CD14-positive monocyte (primary cell): ENCODE measurements at regions of chr4 and their contacts with region 1.

Region 1: GRCh38 chr4:127880764-127881562 is at the start of gene PLK4:
- DNase-seq: peak; percentile 91 to 96 (median 91)
- H3K4me3 ChIP-seq: peak within 1 kb of the TSS; percentile 86 to 99 (median 87)
- H3K4me3 Mint-ChIP-seq: peak within 1 kb of the TSS; percentile 97 to 98
- H3K27ac ChIP-seq: peak within 1 kb of the TSS; percentile 80 to 97
- H3K27ac Mint-ChIP-seq: peak within 1 kb of the TSS; percentile 97 to 98 (median 98)
- H3K4me1 ChIP-seq: peaks cover 11 to 14% of the 10 kb centered on the region in 2 donors
- H3K4me1 Mint-ChIP-seq: peaks cover 14% of the 10 kb centered on the region
- H3K27me3 ChIP-seq: no peaks in the 10 kb centered on the region
- H3K27me3 Mint-ChIP-seq: peaks cover 0 to 2% (median 1%) of the 10 kb centered on the region in 3 donors
- CTCF ChIP-seq: no peak
- polyA plus RNA-seq, gene PLK4: 0.34 to 0.65 (median 0.38) TPM

Region 2: DNA sequence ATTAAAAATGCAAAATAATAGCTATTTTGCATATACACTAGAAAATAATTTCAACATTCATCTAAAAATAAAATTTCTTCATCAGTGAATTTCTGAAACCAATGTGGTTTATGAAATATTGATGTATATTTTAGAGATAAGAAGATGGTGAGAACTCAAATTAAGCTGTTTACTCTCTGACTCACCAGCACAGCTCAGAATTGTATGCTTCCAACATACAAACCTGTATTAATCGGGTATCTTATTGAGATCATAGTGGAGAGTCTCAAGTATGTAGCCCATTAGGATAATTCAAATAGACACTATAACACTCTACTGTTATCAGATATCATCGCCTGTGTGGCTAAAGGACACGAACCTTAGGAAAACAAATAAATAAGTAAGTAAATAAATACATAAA is 1147.7 kb before region 1 on chr4:
- intact Hi-C with region 1: no loop called
- DNase-seq: no peak
- H3K4me3 ChIP-seq: no peak overlapping the region
- H3K4me3 Mint-ChIP-seq: no peak overlapping the region
- H3K27ac ChIP-seq: no peak overlapping the region
- H3K27ac Mint-ChIP-seq: no peak overlapping the region
- H3K4me1 ChIP-seq: no peaks in the 10 kb centered on the region
- H3K4me1 Mint-ChIP-seq: no peaks in the 10 kb centered on the region
- H3K27me3 ChIP-seq: no peaks in the 10 kb centered on the region
- H3K27me3 Mint-ChIP-seq: no peaks in the 10 kb centered on the region
- CTCF ChIP-seq: no peak

Region 3: DNA sequence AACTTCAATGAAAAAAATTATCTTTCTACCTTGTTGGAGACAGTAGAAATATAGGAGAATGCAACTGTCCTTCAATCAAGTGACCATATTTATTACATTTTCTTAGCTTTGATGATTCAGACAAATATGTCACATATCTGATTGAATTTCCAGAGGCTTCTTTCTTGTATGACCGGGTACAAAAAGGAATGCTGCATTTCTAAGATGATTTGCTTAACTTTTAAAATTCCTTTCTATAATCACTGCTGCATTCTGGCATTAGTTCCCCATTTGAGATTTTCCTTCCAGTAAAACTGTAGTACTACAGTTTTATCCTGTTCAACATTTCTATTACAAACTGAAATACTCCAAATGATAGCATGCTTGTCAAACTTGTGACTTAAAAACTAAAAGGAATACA is 78.8 kb after region 1 on chr4:
- intact Hi-C with region 1: loop called in 1 of 2 experiments (anchors 5 kb)
- DNase-seq: no peak
- H3K4me3 ChIP-seq: no peak overlapping the region
- H3K4me3 Mint-ChIP-seq: no peak overlapping the region
- H3K27ac ChIP-seq: no peak overlapping the region
- H3K27ac Mint-ChIP-seq: no peak overlapping the region
- H3K4me1 ChIP-seq: peaks cover 6 to 8% of the 10 kb centered on the region in 2 donors
- H3K4me1 Mint-ChIP-seq: peaks cover 13% of the 10 kb centered on the region
- H3K27me3 ChIP-seq: no peaks in the 10 kb centered on the region
- H3K27me3 Mint-ChIP-seq: no peaks in the 10 kb centered on the region
- CTCF ChIP-seq: no peak

Region 4: DNA sequence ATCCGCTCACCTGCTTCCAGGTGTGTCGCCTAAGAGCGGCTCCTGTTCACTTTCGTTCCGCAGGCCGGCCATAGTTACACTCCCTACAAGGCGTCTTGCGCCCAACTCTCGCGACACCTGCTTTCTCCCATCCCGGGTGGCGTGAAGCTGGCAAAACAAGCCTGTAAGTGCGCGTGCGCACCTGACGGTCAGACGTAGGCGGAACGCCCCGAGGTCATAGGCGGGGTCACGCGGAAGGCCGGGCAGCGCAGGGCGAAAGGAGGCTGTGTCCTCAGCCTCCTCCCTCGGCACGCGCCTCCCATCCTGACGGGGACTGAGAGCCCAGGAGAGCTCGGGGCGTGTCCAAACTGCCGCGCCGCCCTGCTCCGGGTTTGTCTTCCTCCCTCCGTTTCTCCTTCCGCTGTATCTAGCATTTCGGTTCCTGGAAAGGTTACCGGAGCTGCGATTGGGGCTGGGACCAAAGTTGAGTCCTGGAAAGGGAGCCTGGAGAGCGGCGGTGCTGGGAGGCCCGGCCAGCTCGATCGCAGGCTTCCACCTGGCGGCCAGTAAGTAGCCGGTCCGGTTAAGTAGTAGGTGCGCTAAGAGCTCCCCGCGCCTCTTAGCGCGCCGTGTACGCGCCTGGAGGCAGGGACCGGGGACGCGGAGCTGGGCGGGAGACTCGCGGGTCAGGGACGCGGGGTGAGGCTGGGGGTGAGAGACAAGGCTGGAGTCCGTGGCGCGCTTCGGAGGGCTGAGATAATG is 84.3 kb after region 1 on chr4 and contains the starts of genes ABHD18 and MFSD8:
- intact Hi-C with region 1: loop called (anchors 5 kb)
- DNase-seq: peak; percentile 100
- H3K4me3 ChIP-seq: peak within 1 kb of the TSS; percentile 83 to 96 (median 92)
- H3K4me3 Mint-ChIP-seq: peak within 1 kb of the TSS; percentile 94
- H3K27ac ChIP-seq: peak within 1 kb of the TSS; percentile 91 to 97
- H3K27ac Mint-ChIP-seq: peak within 1 kb of the TSS; percentile 91 to 97 (median 96)
- H3K4me1 ChIP-seq: peaks cover 12 to 17% of the 10 kb centered on the region in 2 donors
- H3K4me1 Mint-ChIP-seq: peaks cover 26% of the 10 kb centered on the region
- H3K27me3 ChIP-seq: no peaks in the 10 kb centered on the region
- H3K27me3 Mint-ChIP-seq: no peaks in the 10 kb centered on the region
- CTCF ChIP-seq: peak; percentile 45
- polyA plus RNA-seq, gene ABHD18: 6.1 to 9.5 (median 6.4) TPM
- polyA plus RNA-seq, gene MFSD8: 7.0 to 15.8 (median 14.2) TPM

Region 5: DNA sequence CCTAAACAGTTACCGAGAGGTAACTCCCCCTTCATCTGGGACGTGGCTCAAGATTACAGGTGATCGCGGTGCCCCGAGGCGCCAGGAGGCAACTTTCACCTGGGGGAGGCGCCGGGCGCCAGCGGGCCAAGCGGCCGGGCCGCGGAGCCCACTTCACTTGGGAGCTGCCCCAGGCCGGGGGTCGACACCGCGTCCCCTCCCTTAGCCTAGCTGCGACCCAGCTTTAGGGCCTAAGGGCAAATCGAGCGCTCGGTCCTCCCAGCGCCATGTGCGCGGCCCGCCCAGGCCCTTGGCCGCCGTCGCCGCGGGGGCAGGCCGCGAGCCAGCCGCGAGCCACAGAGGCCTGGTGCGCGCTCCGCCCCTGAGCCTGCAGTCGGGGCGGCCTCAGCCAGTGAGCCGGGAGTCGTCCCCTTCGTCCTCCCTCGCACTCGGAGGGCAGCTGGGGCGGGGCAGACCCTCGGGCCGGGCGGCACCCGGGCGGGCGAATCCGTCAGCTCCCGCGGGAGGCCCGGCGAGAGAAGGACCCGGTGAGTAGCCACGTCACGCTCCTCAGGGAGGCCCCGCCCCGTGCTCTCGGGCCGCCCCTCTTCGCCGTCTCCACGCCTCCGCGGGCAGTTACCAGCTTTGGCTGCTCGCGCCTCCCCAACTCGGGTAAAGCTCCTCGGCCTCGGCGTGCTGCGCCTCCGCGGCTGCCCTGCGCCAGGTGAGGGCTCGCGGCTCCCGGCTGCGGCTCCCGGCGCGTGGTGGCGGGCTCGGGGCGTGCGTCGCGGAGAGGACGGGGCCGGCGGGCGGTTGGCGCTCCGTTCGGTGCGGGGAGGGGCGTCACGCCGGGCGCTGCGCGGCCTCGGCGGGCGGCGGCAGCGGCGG is 180.0 kb after region 1 on chr4 and contains the start of gene LARP1B:
- intact Hi-C with region 1: loop called in 1 of 2 experiments (anchors 10 kb)
- DNase-seq: peak; percentile 85 to 89 (median 85)
- H3K4me3 ChIP-seq: peak within 1 kb of the TSS; percentile 51 to 82 (median 52)
- H3K4me3 Mint-ChIP-seq: peak within 1 kb of the TSS; percentile 85 to 92
- H3K27ac ChIP-seq: peak within 1 kb of the TSS; percentile 55 to 75
- H3K27ac Mint-ChIP-seq: peak within 1 kb of the TSS; percentile 71 to 92 (median 87)
- H3K4me1 ChIP-seq: peaks cover 10 to 20% of the 10 kb centered on the region in 2 donors
- H3K4me1 Mint-ChIP-seq: peaks cover 13% of the 10 kb centered on the region
- H3K27me3 ChIP-seq: no peaks in the 10 kb centered on the region
- H3K27me3 Mint-ChIP-seq: peaks cover 0 to 5% (median 2%) of the 10 kb centered on the region in 3 donors
- CTCF ChIP-seq: no peak
- polyA plus RNA-seq, gene LARP1B: 3.0 to 5.7 (median 3.7) TPM